A549 (cell line): ENCODE measurements at regions of chr11 and their contacts with region 1.

Region 1: GRCh38 chr11:10405855-10406592 is 49.0 kb upstream of the AMPD3 start:
- DNase-seq: peak; percentile 78 to 90
- ATAC-seq: peak; percentile 88 to 93
- H3K4me3 ChIP-seq: no peak overlapping the region
- H3K27ac ChIP-seq: peak overlapping the region; percentile 75 to 79
- H3K4me1 ChIP-seq: peaks cover 26% of the 10 kb centered on the region
- CTCF ChIP-seq: peak; percentile 87
- EP300 ChIP-seq: no peak
- POLR2A ChIP-seq: no peak
- RAD21 ChIP-seq: peak; percentile 92 to 94

Region 2: DNA sequence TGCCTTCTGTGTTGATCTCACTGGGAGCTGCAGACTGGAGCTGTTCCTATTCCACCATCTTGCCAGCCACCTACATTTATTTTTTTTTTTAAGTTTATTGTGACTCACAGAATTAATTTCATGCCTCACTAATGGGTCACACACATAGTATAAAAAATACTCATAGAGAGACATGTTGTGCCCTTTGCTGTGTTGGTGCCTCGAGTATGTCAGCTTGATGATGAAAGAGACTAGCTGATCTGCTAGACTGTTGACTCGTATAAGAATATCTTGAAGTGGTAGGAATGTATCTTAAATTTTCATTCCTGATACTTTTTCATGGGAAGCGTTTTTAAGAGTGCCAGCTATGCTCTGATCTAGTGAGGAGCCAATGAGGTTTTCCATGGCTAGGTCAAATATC is 20.5 kb after region 1 on chr11:
- CTCF ChIA-PET with region 1: interaction called, 20 read pairs
- POLR2A ChIA-PET with region 1: no interaction called
- DNase-seq: no peak
- ATAC-seq: no peak
- H3K4me3 ChIP-seq: no peak overlapping the region
- H3K27ac ChIP-seq: no peak overlapping the region
- H3K4me1 ChIP-seq: no peaks in the 10 kb centered on the region
- CTCF ChIP-seq: no peak
- EP300 ChIP-seq: no peak
- POLR2A ChIP-seq: no peak
- RAD21 ChIP-seq: no peak

Region 3: DNA sequence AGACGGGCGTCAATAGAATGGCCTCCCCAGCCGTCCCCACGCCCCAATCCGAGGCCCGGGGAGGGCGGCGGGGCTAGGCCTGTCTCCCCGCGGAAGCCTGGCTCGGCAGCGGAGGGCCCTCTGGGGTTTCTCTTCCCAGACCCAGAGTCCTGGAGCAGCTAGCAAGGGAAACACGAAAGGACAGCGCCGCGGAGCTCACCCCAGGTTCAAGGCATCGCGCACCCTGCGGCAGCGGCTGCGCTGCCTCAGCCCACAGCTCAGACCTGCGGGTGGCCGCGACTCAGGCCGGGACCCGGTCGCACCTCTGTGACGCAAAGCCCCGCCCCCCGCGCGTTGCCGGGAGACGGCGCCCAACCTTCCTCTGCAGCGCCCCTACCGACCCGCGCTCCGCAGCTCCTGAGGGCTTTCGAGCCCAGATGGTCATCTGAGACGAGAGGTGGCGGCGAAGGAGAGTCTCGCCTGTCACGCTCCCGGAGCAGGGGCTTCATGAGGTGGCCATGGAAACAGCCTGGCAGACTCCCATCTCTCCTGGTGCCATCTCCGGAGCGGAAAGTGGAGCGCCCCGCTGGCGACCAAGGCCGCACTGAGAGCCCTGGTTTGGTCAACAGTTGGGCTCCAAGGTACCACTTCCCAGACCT is 135.0 kb after region 1 on chr11 and contains the start of gene RNF141:
- CTCF ChIA-PET with region 1: interaction called, 14 read pairs
- POLR2A ChIA-PET with region 1: interaction called, 4 read pairs
- DNase-seq: peak; percentile 84 to 92
- ATAC-seq: peak; percentile 95 to 97
- H3K4me3 ChIP-seq: peak within 1 kb of the TSS; percentile 75
- H3K27ac ChIP-seq: peak within 1 kb of the TSS; percentile 85 to 87
- H3K4me1 ChIP-seq: peaks cover 15% of the 10 kb centered on the region
- CTCF ChIP-seq: peak; percentile 74
- EP300 ChIP-seq: no peak
- POLR2A ChIP-seq: peak; percentile 97
- RAD21 ChIP-seq: peak; percentile 37 to 56; a peak in 4 of 5 replicates
- polyA plus RNA-seq, gene RNF141: 21.6 and 33.3 TPM in 2 replicates

Region 4: DNA sequence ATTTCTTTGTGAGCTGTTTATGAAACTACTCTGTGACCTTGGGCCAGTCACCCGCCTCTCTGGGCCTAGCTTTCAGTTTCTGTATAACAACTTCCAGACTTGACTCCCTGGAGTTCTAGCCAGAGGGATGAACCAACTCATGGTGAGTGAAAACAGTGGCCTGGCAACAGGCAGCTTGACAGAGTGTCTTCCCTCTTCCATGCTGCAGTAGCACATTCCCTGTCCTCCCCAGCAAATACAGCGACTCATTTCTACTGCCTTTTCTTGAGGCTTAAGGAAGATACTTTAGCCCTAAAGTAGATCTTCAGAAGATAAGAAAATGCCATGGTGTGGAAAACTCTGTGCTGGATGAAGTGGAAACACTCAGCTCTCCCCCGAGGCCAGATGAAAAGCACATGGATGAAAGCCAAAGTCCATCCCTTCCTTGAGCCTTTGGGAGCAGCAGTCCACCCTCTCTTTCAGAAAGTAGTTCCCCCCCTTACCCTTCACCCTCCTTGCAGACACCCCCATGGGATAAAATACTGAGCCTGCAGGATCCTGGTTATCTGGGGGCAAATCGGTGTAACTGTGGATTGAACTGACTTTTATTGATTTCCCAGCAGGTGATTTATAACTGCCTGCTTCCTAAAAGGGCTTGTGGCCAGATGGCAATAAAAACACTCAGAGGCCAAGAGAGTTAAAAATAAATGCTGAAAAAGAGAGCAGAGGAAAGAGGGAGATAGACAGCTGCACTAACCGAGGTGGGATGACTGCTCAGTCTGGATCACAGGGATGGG is 263.4 kb after region 1 on chr11:
- CTCF ChIA-PET with region 1: interaction called, 11 read pairs
- POLR2A ChIA-PET with region 1: no interaction called
- DNase-seq: peak in 1 of 2 experiments; percentile 29
- ATAC-seq: peak in 1 of 2 experiments; percentile 49; a peak in 3 of 6 replicates
- H3K4me3 ChIP-seq: no peak overlapping the region
- H3K27ac ChIP-seq: peak overlapping the region; percentile 13 to 63; a peak in 5 of 6 replicates
- H3K4me1 ChIP-seq: peaks cover 52% of the 10 kb centered on the region
- CTCF ChIP-seq: no peak
- EP300 ChIP-seq: no peak
- POLR2A ChIP-seq: no peak
- RAD21 ChIP-seq: no peak

Region 5: GRCh38 chr11:10735481-10736475 is 329.8 kb after region 1 on chr11:
- CTCF ChIA-PET with region 1: interaction called, 39 read pairs
- POLR2A ChIA-PET with region 1: no interaction called
- DNase-seq: peak; percentile 93 to 97
- ATAC-seq: peak; percentile 98 to 99
- H3K4me3 ChIP-seq: peak overlapping the region; percentile 27
- H3K27ac ChIP-seq: peak overlapping the region; percentile 77 to 88
- H3K4me1 ChIP-seq: peaks cover 13% of the 10 kb centered on the region
- CTCF ChIP-seq: peak; percentile 99
- EP300 ChIP-seq: no peak
- POLR2A ChIP-seq: no peak
- RAD21 ChIP-seq: peak; percentile 98 to 100